K562 (cell line): ENCODE measurements at regions of chr11 and their contacts with region 1.

Region 1: DNA sequence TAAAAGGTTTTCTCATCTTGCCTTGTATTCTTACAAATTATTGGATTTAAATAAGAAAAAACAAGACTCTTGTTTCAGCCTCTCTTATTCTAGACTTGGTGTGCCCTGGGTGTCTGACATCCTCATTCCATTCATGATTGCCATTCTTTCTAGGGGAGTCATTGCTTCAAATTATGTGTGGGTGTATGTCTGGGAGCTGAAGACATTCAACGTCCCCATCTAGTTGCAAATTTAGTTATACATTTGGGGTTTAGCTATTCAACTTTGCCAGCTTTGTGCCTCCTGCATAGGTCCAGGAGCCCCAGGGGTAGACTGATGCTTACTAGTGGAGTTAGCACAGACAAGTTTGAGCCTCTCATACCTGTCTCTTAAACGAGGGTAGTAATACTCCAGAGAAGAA is 18.0 kb downstream of the MAML2 start:
- DNase-seq: no peak
- ATAC-seq: no peak
- H3K4me3 ChIP-seq: no peak overlapping the region
- H3K27ac ChIP-seq: peak overlapping the region; percentile 52; the same call in 2 of the 3 replicates
- H3K4me1 ChIP-seq: peaks cover 18 to 73% of the 10 kb centered on the region in 2 experiments; a peak in 4 of 5 replicates
- H3K27me3 ChIP-seq: no peaks in the 10 kb centered on the region
- CTCF ChIP-seq: no peak
- EP300 ChIP-seq: no peak
- POLR2A ChIP-seq: no peak
- RAD21 ChIP-seq: no peak

Region 2: DNA sequence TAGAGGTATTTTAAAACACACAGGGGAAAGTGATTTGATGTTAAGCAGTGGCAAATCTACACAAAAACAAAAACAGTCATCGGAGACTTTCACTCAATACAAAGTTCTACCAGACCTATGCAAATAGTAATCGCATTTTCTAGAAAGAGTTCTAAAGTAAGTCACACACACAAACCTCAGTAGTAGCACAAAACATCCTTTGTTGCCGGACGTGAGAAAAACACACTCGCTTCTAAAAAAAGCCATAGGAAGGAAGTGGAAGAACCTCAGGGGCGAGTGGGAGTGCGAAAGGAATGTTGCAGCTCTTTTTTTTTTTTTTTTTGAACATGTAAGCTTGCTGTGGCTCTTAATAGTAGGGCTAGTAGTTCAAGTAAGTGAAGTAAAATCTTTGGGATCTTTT is 70.9 kb before region 1 on chr11:
- CTCF ChIA-PET with region 1: no interaction called
- POLR2A ChIA-PET with region 1: interaction called, 3 read pairs
- in situ Hi-C with region 1: no loop called
- intact Hi-C with region 1: loop called (anchors 5 kb)
- DNase-seq: no peak
- ATAC-seq: no peak
- H3K4me3 ChIP-seq: no peak overlapping the region
- H3K27ac ChIP-seq: no peak overlapping the region
- H3K4me1 ChIP-seq: peaks cover 12 to 39% of the 10 kb centered on the region in 2 experiments
- H3K27me3 ChIP-seq: no peaks in the 10 kb centered on the region
- CTCF ChIP-seq: no peak
- EP300 ChIP-seq: no peak
- POLR2A ChIP-seq: no peak
- RAD21 ChIP-seq: no peak

Region 3: GRCh38 chr11:96267496-96268032 is 57.4 kb before region 1 on chr11:
- CTCF ChIA-PET with region 1: no interaction called
- POLR2A ChIA-PET with region 1: no interaction called
- in situ Hi-C with region 1: no loop called
- intact Hi-C with region 1: no loop called
- DNase-seq: no peak
- ATAC-seq: peak; percentile 51
- H3K4me3 ChIP-seq: no peak overlapping the region
- H3K27ac ChIP-seq: no peak overlapping the region
- H3K4me1 ChIP-seq: peaks cover 0 to 11% of the 10 kb centered on the region in 2 experiments; a peak in 3 of 5 replicates
- H3K27me3 ChIP-seq: no peaks in the 10 kb centered on the region
- CTCF ChIP-seq: no peak
- EP300 ChIP-seq: no peak
- POLR2A ChIP-seq: no peak
- RAD21 ChIP-seq: no peak

Region 4: GRCh38 chr11:96314326-96315020 is 10.5 kb before region 1 on chr11:
- CTCF ChIA-PET with region 1: no interaction called
- POLR2A ChIA-PET with region 1: interaction called, 42 read pairs
- in situ Hi-C with region 1: no loop called
- intact Hi-C with region 1: no loop called
- DNase-seq: no peak
- ATAC-seq: no peak
- H3K4me3 ChIP-seq: no peak overlapping the region
- H3K27ac ChIP-seq: no peak overlapping the region
- H3K4me1 ChIP-seq: peaks cover 10 to 49% of the 10 kb centered on the region in 2 experiments
- H3K27me3 ChIP-seq: no peaks in the 10 kb centered on the region
- CTCF ChIP-seq: no peak
- EP300 ChIP-seq: no peak
- POLR2A ChIP-seq: no peak
- RAD21 ChIP-seq: no peak

Region 5: GRCh38 chr11:96337541-96338431 is 12.8 kb after region 1 on chr11:
- CTCF ChIA-PET with region 1: interaction called, 3 read pairs
- POLR2A ChIA-PET with region 1: interaction called, 20 read pairs
- in situ Hi-C with region 1: no loop called
- intact Hi-C with region 1: loop called (anchors 1 kb)
- DNase-seq: peak in 3 of 4 experiments; percentile 35 to 73 (median 38)
- ATAC-seq: peak; percentile 24
- H3K4me3 ChIP-seq: no peak overlapping the region
- H3K27ac ChIP-seq: peak overlapping the region; percentile 57
- H3K4me1 ChIP-seq: peaks cover 30 to 66% of the 10 kb centered on the region in 2 experiments
- H3K27me3 ChIP-seq: no peaks in the 10 kb centered on the region
- CTCF ChIP-seq: no peak
- EP300 ChIP-seq: peak; percentile 73
- POLR2A ChIP-seq: no peak
- RAD21 ChIP-seq: no peak; a peak in 1 of 4 replicates

Region 6: GRCh38 chr11:96567176-96567575 is 242.2 kb after region 1 on chr11:
- CTCF ChIA-PET with region 1: no interaction called
- POLR2A ChIA-PET with region 1: no interaction called
- in situ Hi-C with region 1: no loop called
- intact Hi-C with region 1: no loop called
- DNase-seq: no peak
- ATAC-seq: no peak
- H3K4me3 ChIP-seq: no peak overlapping the region
- H3K27ac ChIP-seq: no peak overlapping the region
- H3K4me1 ChIP-seq: no peaks in the 10 kb centered on the region
- H3K27me3 ChIP-seq: no peaks in the 10 kb centered on the region
- CTCF ChIP-seq: no peak
- EP300 ChIP-seq: no peak
- POLR2A ChIP-seq: no peak
- RAD21 ChIP-seq: no peak